Activated T-helper 2 cell treated with anti-CD3 and anti-CD28 coated beads, Interferon-gamma antibody, Interleukin-2, Interleukin-4, amounts not matched to agents 10 μg/mL and 5 μg/mL and 100 μg/mL, durations not matched to agents 14 hours and 24 hours and 36 hours (primary cell): ENCODE measurements at regions of chr5 and their contacts with region 1.

Region 1: GRCh38 chr5:43313035-43313853 is at the start of gene HMGCS1:
- DNase-seq: peak; percentile 99
- H3K4me3 Mint-ChIP-seq: peak within 1 kb of the TSS; percentile 98
- H3K27ac Mint-ChIP-seq: peak within 1 kb of the TSS; percentile 95
- H3K4me1 Mint-ChIP-seq: peaks cover 67% of the 10 kb centered on the region
- H3K27me3 Mint-ChIP-seq: no peaks in the 10 kb centered on the region
- total RNA-seq, gene HMGCS1: 232 and 233 TPM in 2 replicates

Region 2: GRCh38 chr5:43191740-43192557 is 121.3 kb before region 1 on chr5 and contains the start of gene NIM1K:
- intact Hi-C with region 1: loop called (anchors 1 kb)
- DNase-seq: peak; percentile 35
- H3K4me3 Mint-ChIP-seq: peak within 1 kb of the TSS; percentile 82
- H3K27ac Mint-ChIP-seq: peak within 1 kb of the TSS; percentile 59
- H3K4me1 Mint-ChIP-seq: peaks cover 24% of the 10 kb centered on the region
- H3K27me3 Mint-ChIP-seq: peaks cover 10% of the 10 kb centered on the region
- total RNA-seq, gene NIM1K: 0.76 and 1.1 TPM in 2 replicates

Region 3: GRCh38 chr5:43389679-43390329 is 76.6 kb after region 1 on chr5:
- intact Hi-C with region 1: loop called (anchors 2 kb)
- DNase-seq: peak; percentile 37
- H3K4me3 Mint-ChIP-seq: no peak overlapping the region
- H3K27ac Mint-ChIP-seq: no peak overlapping the region
- H3K4me1 Mint-ChIP-seq: peaks cover 20% of the 10 kb centered on the region
- H3K27me3 Mint-ChIP-seq: no peaks in the 10 kb centered on the region

Region 4: DNA sequence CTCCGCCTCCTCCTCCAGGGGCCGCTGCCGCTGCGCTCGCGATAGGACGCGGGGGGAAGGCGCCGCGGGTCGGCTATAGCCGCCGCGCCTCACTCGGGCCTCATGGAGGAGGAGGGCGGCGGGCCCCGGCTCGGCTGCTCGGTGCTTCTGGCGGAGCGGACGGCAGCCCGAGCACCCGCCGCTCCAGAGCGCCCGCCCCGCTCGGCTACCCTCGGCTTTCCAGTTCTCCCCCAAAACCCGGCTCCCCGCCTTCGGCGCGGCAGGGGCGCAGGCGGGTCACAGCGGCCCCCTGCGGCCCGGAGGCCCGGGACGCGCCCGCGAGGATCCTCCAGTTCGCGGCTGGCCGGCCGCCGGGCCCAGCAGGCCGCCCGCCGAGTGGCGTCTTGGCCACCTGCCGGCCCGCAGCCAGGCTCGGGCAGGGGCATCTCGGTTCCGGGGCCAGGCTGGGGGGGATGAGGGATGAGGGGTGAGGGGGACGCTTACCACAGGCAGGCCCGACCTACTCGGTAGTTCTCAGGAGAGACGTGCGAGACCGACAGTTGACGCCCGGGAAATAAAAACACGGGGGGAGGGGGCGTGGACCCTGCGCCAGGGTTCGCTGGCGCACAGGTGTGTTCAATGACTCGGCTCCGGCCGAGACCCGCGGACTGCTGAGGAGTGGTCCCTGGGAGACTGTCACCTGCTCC is 243.8 kb after region 1 on chr5 and contains the start of gene PAIP1:
- intact Hi-C with region 1: loop called (anchors 2 kb)
- DNase-seq: peak; percentile 84
- H3K4me3 Mint-ChIP-seq: peak within 1 kb of the TSS; percentile 86
- H3K27ac Mint-ChIP-seq: peak within 1 kb of the TSS; percentile 90
- H3K4me1 Mint-ChIP-seq: peaks cover 8% of the 10 kb centered on the region
- H3K27me3 Mint-ChIP-seq: peaks cover 9% of the 10 kb centered on the region
- total RNA-seq, gene PAIP1: 56.8 and 58.0 TPM in 2 replicates